Activated CD4-positive, alpha-beta T cell treated with anti-CD3 and anti-CD28 coated beads for 36 hours (primary cell): ENCODE measurements at regions of chr7 and their contacts with region 1.

Region 1: DNA sequence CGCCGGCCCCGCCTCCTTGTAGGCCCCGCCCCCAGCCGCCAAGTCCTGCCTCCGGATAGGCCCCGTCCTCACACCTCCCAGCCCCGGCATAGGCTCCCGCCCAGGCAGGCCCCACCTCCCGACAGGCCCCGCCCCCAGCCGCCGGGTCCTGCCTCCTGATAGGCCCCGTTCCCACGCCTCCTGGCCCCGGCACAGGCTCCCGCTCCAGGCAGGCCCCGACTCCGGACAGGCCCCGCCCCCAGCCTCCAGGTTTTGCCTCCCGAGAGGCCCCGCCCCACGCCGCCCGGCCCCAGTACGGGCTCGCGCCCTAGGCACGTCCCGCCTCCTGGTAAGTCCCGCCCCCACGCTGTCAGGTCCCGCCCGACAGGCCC is 237 bp upstream of the MICALL2 start:
- DNase-seq: peak; percentile 100
- ATAC-seq: peak; percentile 98
- H3K4me3 Mint-ChIP-seq: peak overlapping the region; percentile 59
- H3K27ac Mint-ChIP-seq: no peak overlapping the region
- H3K4me1 Mint-ChIP-seq: peaks cover 7% of the 10 kb centered on the region
- H3K27me3 Mint-ChIP-seq: no peaks in the 10 kb centered on the region

Region 2: DNA sequence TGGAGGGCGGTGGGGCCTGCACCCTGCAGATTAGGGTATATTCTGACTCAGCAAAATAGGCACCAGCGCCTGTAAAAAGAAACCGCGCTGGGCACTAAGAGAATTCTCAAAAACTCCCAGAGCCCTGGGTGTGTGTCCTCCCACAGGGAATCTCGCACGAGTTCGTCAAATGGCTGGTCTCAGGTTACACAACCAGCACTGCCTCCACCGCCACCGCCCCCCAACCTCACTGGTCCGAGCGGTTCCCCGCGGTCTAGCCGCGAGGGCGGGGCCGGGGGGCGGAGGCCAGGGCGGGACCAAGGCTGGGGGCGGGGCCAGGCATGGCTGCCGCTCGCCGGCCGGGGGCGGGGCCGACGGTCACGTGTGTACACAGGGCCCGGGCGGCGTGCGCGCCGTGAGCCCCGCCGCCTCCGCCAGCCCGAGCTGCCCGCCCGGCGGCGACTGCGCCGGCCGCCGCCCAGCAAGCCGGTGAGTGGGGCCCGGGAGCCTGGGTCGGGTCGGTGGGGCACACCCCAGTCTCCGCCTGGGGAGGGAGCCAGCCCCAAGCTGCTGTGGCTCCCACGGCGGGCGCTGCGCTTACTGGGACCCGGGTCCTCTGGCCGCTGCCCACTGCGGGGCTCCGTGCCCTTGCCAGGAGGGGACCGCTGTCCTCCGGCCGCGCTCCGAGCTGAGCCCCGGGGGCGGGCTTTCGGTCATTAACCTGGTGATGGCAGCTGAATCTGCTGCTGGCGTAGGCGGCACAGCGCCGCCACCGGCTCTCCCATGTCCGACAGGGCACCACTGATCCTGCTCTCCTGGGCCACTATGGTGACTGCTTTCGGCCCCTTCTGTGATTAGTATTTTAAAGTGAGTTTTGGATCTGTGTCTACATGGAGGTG is 415.1 kb before region 1 on chr7 and contains the start of gene GPR146:
- CTCF ChIA-PET with region 1: no interaction called
- POLR2A ChIA-PET with region 1: no interaction called
- intact Hi-C with region 1: loop called in 1 of 2 experiments (anchors 5 kb)
- DNase-seq: peak; percentile 96
- ATAC-seq: peak; percentile 88
- H3K4me3 Mint-ChIP-seq: peak within 1 kb of the TSS; percentile 78
- H3K27ac Mint-ChIP-seq: peak within 1 kb of the TSS; percentile 73
- H3K4me1 Mint-ChIP-seq: peaks cover 61% of the 10 kb centered on the region
- H3K27me3 Mint-ChIP-seq: no peaks in the 10 kb centered on the region
- total RNA-seq, gene GPR146: 4.7 to 5.6 TPM

Region 3: GRCh38 chr7:1169409-1170368 is 289.8 kb before region 1 on chr7:
- CTCF ChIA-PET with region 1: no interaction called
- POLR2A ChIA-PET with region 1: no interaction called
- intact Hi-C with region 1: loop called in 1 of 2 experiments (anchors 1 kb)
- DNase-seq: peak; percentile 98
- ATAC-seq: peak; percentile 99
- H3K4me3 Mint-ChIP-seq: peak overlapping the region; percentile 71
- H3K27ac Mint-ChIP-seq: peak overlapping the region; percentile 94
- H3K4me1 Mint-ChIP-seq: peaks cover 12% of the 10 kb centered on the region
- H3K27me3 Mint-ChIP-seq: no peaks in the 10 kb centered on the region

Region 4: GRCh38 chr7:1412322-1413261 is 46.9 kb before region 1 on chr7:
- CTCF ChIA-PET with region 1: no interaction called
- POLR2A ChIA-PET with region 1: no interaction called
- intact Hi-C with region 1: loop called (anchors 1 kb)
- DNase-seq: peak; percentile 97
- ATAC-seq: peak; percentile 82
- H3K4me3 Mint-ChIP-seq: no peak overlapping the region
- H3K27ac Mint-ChIP-seq: no peak overlapping the region
- H3K4me1 Mint-ChIP-seq: peaks cover 14% of the 10 kb centered on the region
- H3K27me3 Mint-ChIP-seq: peaks cover 5% of the 10 kb centered on the region

Region 5: GRCh38 chr7:1480670-1481069 is 21.2 kb after region 1 on chr7:
- CTCF ChIA-PET with region 1: no interaction called
- POLR2A ChIA-PET with region 1: no interaction called
- intact Hi-C with region 1: no loop called
- DNase-seq: no peak
- ATAC-seq: no peak
- H3K4me3 Mint-ChIP-seq: no peak overlapping the region
- H3K27ac Mint-ChIP-seq: no peak overlapping the region
- H3K4me1 Mint-ChIP-seq: no peaks in the 10 kb centered on the region
- H3K27me3 Mint-ChIP-seq: no peaks in the 10 kb centered on the region

Region 6: DNA sequence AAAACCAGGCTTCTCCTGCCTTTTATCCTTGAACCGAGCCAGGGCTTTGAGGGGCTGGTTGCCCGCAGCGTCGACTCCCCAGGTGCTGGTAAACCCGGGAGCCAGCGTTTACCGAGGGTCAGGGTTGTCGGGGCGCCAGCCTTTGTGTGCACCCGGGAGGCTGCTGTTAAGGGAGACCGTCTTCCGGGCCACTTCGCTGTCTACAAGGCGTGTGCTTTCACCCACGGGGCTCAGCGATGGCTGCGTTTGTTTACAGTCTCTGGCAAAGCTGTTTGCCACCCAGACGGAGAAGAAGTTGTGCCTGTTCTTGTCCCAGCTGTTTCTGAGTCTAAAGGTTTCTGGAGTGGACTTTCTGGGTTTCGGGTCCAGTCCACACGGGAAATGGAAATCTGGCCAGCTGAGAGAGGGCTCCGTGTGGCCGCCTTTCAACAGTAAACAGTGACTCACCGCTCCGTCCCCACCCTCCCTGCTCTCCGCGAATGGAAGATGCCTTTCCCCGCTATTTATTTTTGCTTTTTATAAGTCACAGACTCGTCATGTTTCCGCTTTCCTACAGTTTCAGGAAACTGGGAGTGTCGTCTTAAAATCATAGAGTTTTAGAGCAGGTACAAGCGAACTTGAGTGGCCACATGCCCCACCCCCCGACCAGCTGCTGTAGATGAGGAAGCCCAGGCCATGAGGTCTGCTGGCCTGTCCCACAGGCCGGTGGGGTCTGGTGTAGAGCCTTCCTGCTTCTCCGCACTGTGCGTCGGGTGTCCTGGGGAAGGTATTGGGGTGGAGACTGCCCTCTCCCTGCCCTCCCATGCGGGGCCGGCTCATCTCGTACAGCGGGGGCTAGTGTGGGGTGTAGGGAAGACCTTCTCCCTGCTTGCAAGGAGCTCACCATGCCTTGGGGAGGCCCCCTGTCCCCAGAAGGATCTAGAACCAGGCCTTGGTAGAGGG is 73.2 kb after region 1 on chr7:
- CTCF ChIA-PET with region 1: no interaction called
- POLR2A ChIA-PET with region 1: no interaction called
- intact Hi-C with region 1: loop called in 1 of 2 experiments (anchors 1 kb)
- DNase-seq: peak; percentile 78
- ATAC-seq: peak; percentile 65
- H3K4me3 Mint-ChIP-seq: peak overlapping the region; percentile 89
- H3K27ac Mint-ChIP-seq: peak overlapping the region; percentile 89
- H3K4me1 Mint-ChIP-seq: peaks cover 27% of the 10 kb centered on the region
- H3K27me3 Mint-ChIP-seq: no peaks in the 10 kb centered on the region

Region 7: DNA sequence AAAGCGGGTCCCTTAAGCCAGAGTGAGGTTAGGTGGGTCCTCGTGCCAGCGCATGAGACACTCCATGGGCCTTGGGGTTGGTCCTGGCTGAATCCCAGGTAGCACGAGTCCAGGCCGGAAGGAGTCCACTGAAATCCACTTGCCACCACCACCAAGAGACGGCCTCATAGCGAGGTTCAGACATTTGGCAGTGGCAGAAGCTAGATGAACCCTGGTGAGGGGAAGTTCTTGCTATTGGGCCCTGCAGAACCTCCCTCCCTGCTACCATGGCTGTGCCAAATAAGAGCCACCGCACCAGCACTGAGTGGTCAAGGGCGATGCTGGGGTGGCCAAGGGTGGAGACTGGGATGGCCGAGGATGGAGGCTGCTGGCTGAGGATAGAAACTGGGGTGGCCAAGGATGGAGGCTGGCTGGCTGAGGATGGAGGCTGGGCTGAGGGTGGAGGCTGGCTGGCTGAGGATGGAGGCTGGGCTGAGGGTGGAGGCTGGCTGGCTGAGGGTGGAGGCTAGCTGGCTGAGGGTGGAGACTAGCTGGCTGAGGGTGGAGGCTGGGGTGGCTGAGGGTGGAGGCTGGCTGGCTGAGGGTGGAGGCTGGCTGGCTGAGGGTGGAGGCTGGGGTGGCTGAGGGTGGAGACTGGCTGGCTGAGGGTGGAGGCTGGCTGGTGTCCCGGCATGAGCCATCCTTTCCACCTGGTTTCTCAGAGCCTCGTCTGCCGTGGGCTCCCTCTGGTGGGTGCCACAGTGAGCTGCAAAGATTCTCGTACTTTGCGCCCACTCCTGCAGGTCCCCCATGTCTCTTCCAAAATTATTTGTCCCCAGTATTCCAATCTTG is 298.7 kb after region 1 on chr7:
- CTCF ChIA-PET with region 1: no interaction called
- POLR2A ChIA-PET with region 1: no interaction called
- intact Hi-C with region 1: loop called in 1 of 2 experiments (anchors 5 kb)
- DNase-seq: peak; percentile 66
- ATAC-seq: peak; percentile 60
- H3K4me3 Mint-ChIP-seq: no peak overlapping the region
- H3K27ac Mint-ChIP-seq: no peak overlapping the region
- H3K4me1 Mint-ChIP-seq: peaks cover 3% of the 10 kb centered on the region
- H3K27me3 Mint-ChIP-seq: peaks cover 4% of the 10 kb centered on the region